Activated CD4-positive, alpha-beta memory T cell treated with anti-CD3 and anti-CD28 coated beads for 36 hours (primary cell): ENCODE measurements at regions of chr10 and their contacts with region 1.

Region 1: GRCh38 chr10:3757638-3758490 is 27.1 kb downstream of the KLF6 start:
- DNase-seq: peak; percentile 84
- H3K4me3 Mint-ChIP-seq: peak overlapping the region; percentile 71
- H3K27ac Mint-ChIP-seq: peak overlapping the region; percentile 100
- H3K4me1 Mint-ChIP-seq: peaks cover 83% of the 10 kb centered on the region
- H3K27me3 Mint-ChIP-seq: no peaks in the 10 kb centered on the region

Region 2: DNA sequence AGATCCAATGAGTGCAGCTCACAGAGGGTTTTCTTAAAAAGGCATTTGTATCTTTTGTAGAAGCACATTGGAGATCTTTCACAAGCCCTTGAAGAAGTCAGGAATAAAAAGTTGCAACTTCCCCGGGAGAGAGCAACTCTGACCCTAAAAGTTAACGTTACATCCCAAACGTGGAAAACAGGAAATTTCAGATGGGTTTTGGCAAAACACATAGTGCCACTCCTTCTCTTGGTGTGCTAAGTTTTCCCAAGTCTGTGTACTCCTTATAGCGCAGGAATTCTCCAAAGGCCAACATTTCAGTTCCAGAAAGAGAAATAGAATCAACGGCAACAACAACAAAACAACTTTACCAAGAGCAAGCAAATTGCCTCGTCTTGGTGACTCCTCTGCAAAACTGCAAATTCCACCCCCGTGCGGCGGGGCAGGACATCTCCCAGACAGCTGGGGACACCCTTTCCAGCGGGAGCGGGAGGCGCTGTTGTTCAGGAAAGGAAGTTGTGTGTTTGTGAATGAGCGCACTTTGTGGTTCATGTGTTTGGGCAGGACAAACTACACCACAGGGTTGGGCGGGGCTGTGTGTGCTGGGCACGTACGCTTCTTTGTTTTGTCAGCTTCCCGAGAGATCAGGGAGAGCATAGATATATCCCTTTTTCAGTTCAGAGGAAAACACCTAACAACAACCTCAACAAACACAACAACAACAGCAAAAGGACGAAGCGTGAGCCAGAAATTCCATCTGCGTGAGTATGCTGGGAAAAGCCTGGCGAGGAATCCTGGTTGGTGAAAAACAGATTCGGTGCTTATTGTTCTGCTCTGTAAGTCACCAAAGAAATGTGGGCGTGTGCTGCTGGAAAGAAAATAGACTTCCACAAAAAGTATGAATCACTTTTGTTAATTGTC is 290.6 kb before region 1 on chr10:
- CTCF ChIA-PET with region 1: no interaction called
- POLR2A ChIA-PET with region 1: no interaction called
- intact Hi-C with region 1: loop called (anchors 5 kb)
- DNase-seq: peak; percentile 29
- H3K4me3 Mint-ChIP-seq: peak overlapping the region; percentile 64
- H3K27ac Mint-ChIP-seq: peak overlapping the region; percentile 63
- H3K4me1 Mint-ChIP-seq: peaks cover 46% of the 10 kb centered on the region
- H3K27me3 Mint-ChIP-seq: no peaks in the 10 kb centered on the region

Region 3: GRCh38 chr10:3605882-3606281 is 152.0 kb before region 1 on chr10:
- CTCF ChIA-PET with region 1: no interaction called
- POLR2A ChIA-PET with region 1: no interaction called
- intact Hi-C with region 1: loop called (anchors 5 kb)
- DNase-seq: peak; percentile 20
- H3K4me3 Mint-ChIP-seq: no peak overlapping the region
- H3K27ac Mint-ChIP-seq: peak overlapping the region; percentile 55
- H3K4me1 Mint-ChIP-seq: peaks cover 18% of the 10 kb centered on the region
- H3K27me3 Mint-ChIP-seq: no peaks in the 10 kb centered on the region

Region 4: DNA sequence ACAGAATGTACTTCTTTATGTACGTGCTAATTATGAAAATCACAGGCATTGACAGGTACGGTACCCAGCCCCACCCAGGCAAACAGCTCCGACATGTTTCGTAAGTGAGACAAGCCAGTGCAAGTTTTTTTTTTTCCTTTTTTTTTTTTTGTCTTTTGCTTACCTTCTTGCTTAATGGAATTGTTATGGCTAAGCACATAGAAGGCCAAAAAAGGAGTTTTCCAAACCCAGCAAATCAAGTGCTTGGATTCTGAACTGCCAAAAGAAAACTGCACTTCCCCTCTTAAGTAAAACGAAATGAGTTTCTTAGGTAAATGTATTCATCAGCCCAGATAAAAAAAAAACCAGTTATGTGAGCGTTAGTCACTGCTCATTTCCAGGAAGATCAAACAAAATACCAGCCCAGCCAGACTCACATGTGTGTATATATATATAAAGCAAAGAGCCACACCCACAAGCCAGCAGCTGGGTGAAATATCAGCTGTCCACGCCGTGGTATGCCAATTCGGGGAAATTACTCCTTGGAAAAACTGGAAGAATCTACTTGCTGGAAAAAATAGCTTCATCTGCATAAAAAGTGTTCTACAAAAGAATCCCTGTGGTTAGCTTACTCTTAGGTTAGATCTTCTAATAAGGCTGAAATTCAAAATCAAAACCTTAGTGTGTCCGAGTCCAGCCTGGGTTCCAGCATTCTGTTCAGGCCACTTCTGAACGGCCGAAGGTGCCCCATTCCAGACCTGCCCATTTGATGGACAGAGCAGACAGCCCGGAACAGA is 19.1 kb after region 1 on chr10:
- CTCF ChIA-PET with region 1: interaction called, 10 read pairs
- POLR2A ChIA-PET with region 1: interaction called, 112 read pairs
- intact Hi-C with region 1: loop called (anchors 1 kb)
- DNase-seq: peak; percentile 70
- H3K4me3 Mint-ChIP-seq: peak overlapping the region; percentile 67
- H3K27ac Mint-ChIP-seq: peak overlapping the region; percentile 83
- H3K4me1 Mint-ChIP-seq: peaks cover 77% of the 10 kb centered on the region
- H3K27me3 Mint-ChIP-seq: no peaks in the 10 kb centered on the region

Region 5: DNA sequence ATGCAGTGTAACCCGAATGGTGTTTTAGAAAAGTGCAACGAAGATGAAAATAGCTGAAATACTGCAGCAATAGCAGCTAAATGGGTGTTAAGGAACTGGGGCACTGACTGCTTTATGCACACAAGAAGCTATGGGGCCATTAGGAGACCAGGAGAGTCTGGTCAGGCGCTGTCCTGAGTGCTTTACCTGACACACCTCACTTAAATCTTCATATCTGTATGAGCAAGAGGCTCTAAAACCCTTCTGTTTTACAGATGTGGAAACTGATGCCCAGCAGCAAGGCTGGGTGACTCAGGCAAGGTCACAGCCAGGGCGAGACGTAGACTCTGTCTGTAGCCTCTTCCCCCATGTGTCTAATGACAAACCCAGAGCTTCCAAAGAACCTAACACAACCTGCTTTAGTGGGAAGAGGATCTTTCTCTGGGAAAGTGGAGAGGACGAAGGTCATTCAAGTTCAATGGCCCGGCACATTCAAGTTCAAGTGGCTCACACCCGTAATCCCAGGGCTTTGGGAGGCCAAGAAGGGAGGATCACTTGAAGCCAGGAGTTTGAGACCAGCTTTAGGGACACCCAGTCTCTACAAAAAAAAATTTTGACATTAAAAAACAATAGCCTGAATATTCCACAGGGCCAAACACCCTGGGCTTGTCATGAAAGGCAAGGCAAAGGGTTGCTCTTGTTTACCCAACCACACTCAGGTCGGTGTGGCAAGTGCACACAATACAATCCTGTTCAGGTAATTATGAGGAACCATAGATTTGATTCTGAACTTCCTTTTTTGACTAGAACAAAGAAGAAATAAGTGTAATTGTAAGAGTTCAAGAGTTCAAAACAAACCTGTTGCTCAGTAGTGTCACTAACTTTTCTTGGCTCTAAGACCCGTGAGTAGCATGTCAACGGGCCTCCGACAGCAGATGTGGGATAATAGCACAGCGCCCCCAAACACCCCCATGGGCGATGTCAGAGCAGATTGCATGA is 80.9 kb after region 1 on chr10:
- CTCF ChIA-PET with region 1: no interaction called
- POLR2A ChIA-PET with region 1: no interaction called
- intact Hi-C with region 1: no loop called
- DNase-seq: no peak
- H3K4me3 Mint-ChIP-seq: no peak overlapping the region
- H3K27ac Mint-ChIP-seq: no peak overlapping the region
- H3K4me1 Mint-ChIP-seq: peaks cover 53% of the 10 kb centered on the region
- H3K27me3 Mint-ChIP-seq: no peaks in the 10 kb centered on the region

Region 6: DNA sequence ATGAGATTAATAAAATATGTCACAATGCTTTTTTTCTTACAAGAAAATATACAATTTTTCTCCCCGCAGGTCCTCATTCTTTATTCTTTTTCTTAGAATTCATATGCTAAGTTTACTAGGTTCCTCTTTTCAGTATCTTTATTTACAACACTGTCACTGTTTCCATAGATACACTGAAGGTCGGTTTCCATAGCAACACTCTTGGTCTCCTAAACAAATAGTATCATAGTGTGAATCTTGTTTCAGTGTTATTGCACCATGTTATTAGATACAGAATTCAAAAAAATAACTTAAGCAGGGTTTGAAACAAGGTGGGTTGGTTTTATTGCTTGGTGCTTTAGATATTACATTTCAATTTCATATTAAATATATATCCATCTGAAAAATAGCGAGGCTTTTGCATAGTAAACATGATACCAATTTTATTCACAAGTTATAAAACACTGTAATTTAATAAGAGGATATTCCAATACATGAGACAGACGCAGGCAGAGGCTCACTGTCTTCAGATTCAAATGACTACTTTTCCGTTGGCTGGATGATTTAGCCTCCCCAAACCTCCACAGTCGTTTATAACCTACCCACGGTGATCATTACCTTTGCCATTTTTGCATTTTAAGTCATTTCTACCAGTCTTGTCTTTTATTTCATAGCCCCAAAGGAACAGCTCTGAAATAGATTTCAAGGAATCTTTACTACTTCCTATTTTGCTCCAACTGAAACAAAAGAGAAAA is 116.0 kb after region 1 on chr10:
- CTCF ChIA-PET with region 1: no interaction called
- POLR2A ChIA-PET with region 1: no interaction called
- intact Hi-C with region 1: loop called (anchors 1 kb)
- DNase-seq: no peak
- H3K4me3 Mint-ChIP-seq: no peak overlapping the region
- H3K27ac Mint-ChIP-seq: peak overlapping the region; percentile 87
- H3K4me1 Mint-ChIP-seq: peaks cover 72% of the 10 kb centered on the region
- H3K27me3 Mint-ChIP-seq: no peaks in the 10 kb centered on the region